ENCODE measurements at regions of chr14 and their contacts with region 1.

Region 1: DNA sequence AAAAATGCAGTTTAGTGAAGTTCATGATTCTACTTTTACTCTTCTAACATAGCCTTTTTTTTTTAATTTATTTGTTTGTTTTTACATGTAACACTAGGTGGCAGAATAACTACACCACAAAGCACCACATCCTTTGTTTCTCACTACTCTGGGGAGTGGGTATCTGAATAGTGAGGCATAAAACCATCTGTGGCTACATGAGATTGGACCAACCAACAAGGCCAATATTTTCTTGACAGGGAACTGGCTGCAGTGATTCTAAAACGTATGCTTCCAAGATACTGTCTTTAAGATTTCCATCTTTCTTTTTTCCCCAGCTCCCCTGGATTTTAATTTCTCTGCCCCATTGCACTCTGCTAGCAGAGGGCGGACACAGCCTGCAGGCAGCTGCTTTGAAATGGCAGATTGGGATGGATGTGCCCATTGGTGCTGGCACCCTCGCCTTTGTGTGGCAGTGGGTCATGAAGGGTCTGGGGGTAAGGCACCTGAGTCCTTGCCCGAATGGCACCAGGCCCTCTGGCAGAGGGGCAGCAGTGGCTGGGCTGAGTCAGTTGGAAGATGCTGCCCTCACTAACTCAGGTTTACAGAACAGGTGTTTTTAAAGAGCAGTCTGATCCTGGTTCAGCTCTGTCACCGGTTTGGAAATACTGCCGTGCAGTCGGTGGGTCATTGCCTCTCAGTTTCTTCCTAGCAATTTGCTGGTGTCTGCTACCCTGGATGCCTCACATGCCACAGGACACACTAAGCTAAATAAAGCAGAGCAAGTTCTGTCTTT is 429.1 kb downstream of the RAD51B start:
- DNase-seq: peak; percentile 35
- H3K4me3 ChIP-seq: no peak overlapping the region
- H3K27ac ChIP-seq: peak overlapping the region; percentile 22
- H3K4me1 ChIP-seq: peaks cover 37% of the 10 kb centered on the region
- H3K27me3 ChIP-seq: no peaks in the 10 kb centered on the region
- CTCF ChIP-seq: peak; percentile 29 to 62

Region 2: DNA sequence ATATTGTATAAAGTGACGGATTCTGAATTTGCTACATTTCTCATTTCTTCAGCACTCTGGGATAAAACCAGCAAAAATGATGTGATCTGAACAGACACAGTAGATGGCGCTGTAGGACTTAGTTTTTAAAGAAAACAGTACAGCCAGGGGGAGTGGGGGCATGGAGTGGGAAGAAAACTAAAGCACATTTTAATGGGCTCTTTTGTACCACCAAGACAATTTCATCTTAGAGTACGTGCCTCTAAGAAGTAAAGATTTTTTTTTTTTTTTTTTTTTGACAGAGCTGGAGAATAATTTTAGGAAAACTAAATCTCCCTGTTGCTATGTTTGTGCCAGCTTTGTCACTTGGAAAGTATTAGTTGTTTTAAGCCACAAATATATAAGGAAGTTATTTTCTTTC is 304.7 kb before region 1 on chr14:
- CTCF ChIA-PET with region 1: no interaction called
- dilution Hi-C with region 1: loop called (anchors 25 kb)
- in situ Hi-C with region 1: loop called (anchors 5 to 10 kb)
- intact Hi-C with region 1: loop called (anchors 1 kb)
- DNase-seq: peak; percentile 61
- H3K4me3 ChIP-seq: no peak overlapping the region
- H3K27ac ChIP-seq: no peak overlapping the region
- H3K4me1 ChIP-seq: peaks cover 17% of the 10 kb centered on the region
- H3K27me3 ChIP-seq: no peaks in the 10 kb centered on the region
- CTCF ChIP-seq: peak; percentile 63 to 76

Region 3: GRCh38 chr14:68377459-68377858 is 128.8 kb after region 1 on chr14:
- CTCF ChIA-PET with region 1: no interaction called
- dilution Hi-C with region 1: no loop called
- in situ Hi-C with region 1: no loop called
- intact Hi-C with region 1: loop called (anchors 10 kb)
- DNase-seq: peak; percentile 73
- H3K4me3 ChIP-seq: no peak overlapping the region
- H3K27ac ChIP-seq: peak overlapping the region; percentile 70
- H3K4me1 ChIP-seq: peaks cover 21% of the 10 kb centered on the region
- H3K27me3 ChIP-seq: no peaks in the 10 kb centered on the region
- CTCF ChIP-seq: no peak

Region 4: DNA sequence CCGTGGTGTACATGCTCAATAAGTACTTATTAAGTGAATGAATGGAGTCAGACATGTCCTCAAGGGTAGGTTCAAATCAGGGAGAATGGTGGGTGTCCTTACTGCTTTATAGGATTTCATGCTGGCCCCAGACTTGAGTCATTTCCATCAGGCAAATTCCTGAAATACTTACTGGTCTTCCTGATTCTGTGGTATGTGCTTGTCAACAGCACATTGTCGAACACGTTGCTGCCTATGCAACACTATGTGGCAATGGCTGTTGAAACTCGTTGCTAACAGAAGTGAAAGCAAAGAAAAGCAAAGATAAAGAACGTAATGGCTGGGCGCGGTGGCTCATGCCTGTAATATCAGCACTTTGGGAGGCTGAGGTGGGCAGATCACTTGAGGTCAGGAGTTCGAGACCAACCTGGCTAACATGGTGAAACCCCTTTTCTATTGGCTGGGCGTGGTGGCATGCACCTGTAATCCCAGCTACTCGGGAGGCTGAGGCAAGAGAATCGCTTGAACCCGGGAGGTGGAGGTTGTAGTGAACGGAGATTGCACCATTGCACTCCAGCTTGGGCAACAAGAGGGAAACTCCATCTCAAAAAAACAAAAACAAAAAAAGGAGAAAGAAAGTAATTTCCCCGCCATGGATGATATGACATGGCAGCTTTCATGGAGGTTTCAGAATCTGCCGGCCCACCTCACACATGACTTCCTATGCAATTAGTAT is 329.3 kb after region 1 on chr14:
- CTCF ChIA-PET with region 1: no interaction called
- dilution Hi-C with region 1: no loop called
- in situ Hi-C with region 1: no loop called
- intact Hi-C with region 1: loop called (anchors 5 kb)
- DNase-seq: peak; percentile 96
- H3K4me3 ChIP-seq: no peak overlapping the region
- H3K27ac ChIP-seq: peak overlapping the region; percentile 82
- H3K4me1 ChIP-seq: peaks cover 40% of the 10 kb centered on the region
- H3K27me3 ChIP-seq: no peaks in the 10 kb centered on the region
- CTCF ChIP-seq: no peak

Region 5: DNA sequence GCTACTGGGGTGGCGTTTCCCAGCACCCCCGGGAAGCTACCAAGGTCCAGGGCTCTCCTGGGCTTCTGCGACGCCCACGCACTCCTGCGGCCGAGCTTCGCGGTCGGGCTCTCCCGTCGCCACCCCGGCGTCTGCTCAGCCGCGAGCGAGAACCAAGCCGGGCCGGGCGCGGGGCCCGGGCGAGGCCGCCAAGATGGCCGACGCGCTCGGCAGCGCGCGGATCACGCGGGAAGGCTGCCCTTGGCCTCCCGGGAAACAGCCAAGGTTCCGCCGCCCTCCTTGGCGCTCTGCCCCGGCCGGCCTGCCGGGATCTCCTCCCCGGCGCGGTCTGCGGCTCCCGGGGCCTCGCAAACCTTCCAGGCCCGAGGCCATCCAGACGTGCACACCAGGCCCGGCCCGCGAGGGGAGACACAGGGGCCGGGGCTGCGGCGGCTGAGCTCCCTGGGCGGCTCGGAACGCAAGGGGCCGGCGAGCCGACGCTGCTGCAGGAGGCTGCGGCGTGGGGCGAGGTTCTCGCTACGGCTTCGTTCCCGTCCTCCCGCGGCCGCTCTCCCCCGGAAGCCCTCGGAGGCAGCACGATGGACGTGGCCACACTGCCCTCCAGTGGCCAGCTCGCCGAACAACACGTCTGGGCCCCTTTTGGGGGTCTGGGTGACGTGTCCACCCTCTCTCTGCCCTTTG is 567.7 kb after region 1 on chr14:
- CTCF ChIA-PET with region 1: no interaction called
- dilution Hi-C with region 1: loop called (anchors 25 kb)
- in situ Hi-C with region 1: loop called (anchors 10 kb)
- intact Hi-C with region 1: loop called (anchors 1 kb)
- DNase-seq: peak; percentile 82
- H3K4me3 ChIP-seq: peak overlapping the region; percentile 31 to 54 (median 45)
- H3K27ac ChIP-seq: peak overlapping the region; percentile 80
- H3K4me1 ChIP-seq: peaks cover 29% of the 10 kb centered on the region
- H3K27me3 ChIP-seq: no peaks in the 10 kb centered on the region
- CTCF ChIP-seq: peak; percentile 78 to 91